Spleen (tissue), 13 donors: ENCODE measurements at regions of chr19 and their contacts with region 1.

Region 1: DNA sequence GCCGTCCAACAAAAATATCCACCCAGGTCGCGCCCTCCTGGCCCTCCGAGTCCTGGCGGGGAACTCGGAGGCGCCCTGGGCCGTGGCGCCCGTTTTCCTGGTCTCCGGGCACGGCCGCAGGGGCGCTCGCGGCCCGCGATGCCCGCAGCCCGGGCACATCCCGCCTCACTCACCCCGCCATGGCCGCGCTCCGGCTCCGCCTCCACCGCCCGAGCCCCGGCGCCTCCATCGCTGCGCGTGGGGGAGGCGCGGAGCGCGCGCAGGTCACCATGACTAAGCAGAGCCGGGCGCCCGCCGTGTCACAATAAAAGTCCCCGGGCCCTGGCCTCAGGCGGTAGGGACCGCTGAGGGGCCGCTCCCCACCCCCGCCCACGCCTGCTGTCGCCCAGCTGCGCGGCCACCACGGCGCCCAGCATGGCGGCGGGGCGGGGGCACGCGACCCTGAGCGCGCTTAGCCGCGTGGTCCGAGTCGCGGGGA is 593 bp downstream of the KEAP1 start:
- DNase-seq: peak; percentile 98
- H3K4me3 ChIP-seq: peak overlapping the region; percentile 87 to 92 (median 89)
- H3K27ac ChIP-seq: peak overlapping the region; percentile 91 to 99 (median 98)
- H3K4me1 ChIP-seq: peaks cover 24 to 67% (median 57%) of the 10 kb centered on the region in 6 donors
- H3K27me3 ChIP-seq: no peaks in the 10 kb centered on the region
- CTCF ChIP-seq: peak in 2 of 11 experiments; percentile 15 to 16
- POLR2A ChIP-seq: peak in 2 of 3 donors; percentile 26 to 44

Region 2: GRCh38 chr19:10565567-10566407 is 63.2 kb after region 1 on chr19 and contains the start of gene KRI1:
- intact Hi-C with region 1: loop called (anchors 5 kb)
- DNase-seq: peak; percentile 100
- H3K4me3 ChIP-seq: peak within 1 kb of the TSS; percentile 77 to 98 (median 89)
- H3K27ac ChIP-seq: peak within 1 kb of the TSS; percentile 69 to 98 (median 94)
- H3K4me1 ChIP-seq: peaks cover 28 to 76% (median 47%) of the 10 kb centered on the region in 6 donors
- H3K27me3 ChIP-seq: no peaks in the 10 kb centered on the region
- CTCF ChIP-seq: peak; percentile 18 to 72 (median 61)
- POLR2A ChIP-seq: peak in 2 of 3 donors; percentile 40 to 56
- total RNA-seq, gene KRI1: 24.9 to 39.6 (median 31.4) TPM